Prostate gland (tissue), 2 donors: ENCODE measurements at regions of chr10 and their contacts with region 1.

Region 1: GRCh38 chr10:15824498-15824897 is 35.8 kb downstream of the MINDY3 start:
- DNase-seq: no peak
- H3K4me3 ChIP-seq: no peak overlapping the region
- H3K27ac ChIP-seq: no peak overlapping the region
- H3K4me1 ChIP-seq: no peaks in the 10 kb centered on the region
- H3K27me3 ChIP-seq: no peaks in the 10 kb centered on the region
- CTCF ChIP-seq: peak in 3 of 4 experiments; percentile 55 to 59 (median 56)
- POLR2A ChIP-seq: no peak

Region 2: GRCh38 chr10:15433850-15434537 is 390.5 kb before region 1 on chr10:
- intact Hi-C with region 1: loop called (anchors 2 kb)
- DNase-seq: peak; percentile 40
- H3K4me3 ChIP-seq: peak overlapping the region in 1 of 2 donors; percentile 24
- H3K27ac ChIP-seq: no peak overlapping the region
- H3K4me1 ChIP-seq: no peaks in the 10 kb centered on the region
- H3K27me3 ChIP-seq: no peaks in the 10 kb centered on the region
- CTCF ChIP-seq: peak; percentile 58 to 84 (median 72)
- POLR2A ChIP-seq: no peak

Region 3: DNA sequence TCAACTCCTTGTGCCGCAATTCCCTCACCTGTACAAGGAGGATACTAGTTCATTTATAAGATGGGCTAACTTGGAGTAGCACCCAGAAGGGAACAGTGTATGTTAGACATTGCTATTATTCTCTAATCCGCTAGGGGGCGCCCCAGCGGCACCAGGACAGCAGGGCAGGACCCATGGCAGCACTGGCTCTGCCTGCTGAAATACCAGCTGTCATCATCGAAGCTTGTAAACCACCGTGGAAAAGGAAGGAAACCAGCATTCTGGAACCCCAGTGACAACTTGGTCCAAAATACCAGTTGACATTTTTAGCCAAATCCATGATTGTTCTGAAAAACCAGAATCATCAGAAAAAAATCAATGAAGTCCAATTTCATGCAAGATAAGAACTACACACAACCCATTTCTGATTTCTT is 239.2 kb before region 1 on chr10:
- intact Hi-C with region 1: loop called (anchors 5 kb)
- DNase-seq: peak; percentile 39
- H3K4me3 ChIP-seq: no peak overlapping the region
- H3K27ac ChIP-seq: no peak overlapping the region
- H3K4me1 ChIP-seq: no peaks in the 10 kb centered on the region
- H3K27me3 ChIP-seq: no peaks in the 10 kb centered on the region
- CTCF ChIP-seq: peak; percentile 46 to 72 (median 52)
- POLR2A ChIP-seq: no peak

Region 4: GRCh38 chr10:15642095-15642494 is 182.4 kb before region 1 on chr10:
- intact Hi-C with region 1: no loop called
- DNase-seq: no peak
- H3K4me3 ChIP-seq: no peak overlapping the region
- H3K27ac ChIP-seq: no peak overlapping the region
- H3K4me1 ChIP-seq: no peaks in the 10 kb centered on the region
- H3K27me3 ChIP-seq: no peaks in the 10 kb centered on the region
- CTCF ChIP-seq: no peak
- POLR2A ChIP-seq: no peak

Region 5: GRCh38 chr10:15738270-15738925 is 86.1 kb before region 1 on chr10:
- intact Hi-C with region 1: loop called (anchors 5 kb)
- DNase-seq: no peak
- H3K4me3 ChIP-seq: no peak overlapping the region
- H3K27ac ChIP-seq: no peak overlapping the region
- H3K4me1 ChIP-seq: no peaks in the 10 kb centered on the region
- H3K27me3 ChIP-seq: no peaks in the 10 kb centered on the region
- CTCF ChIP-seq: no peak
- POLR2A ChIP-seq: no peak